CD4-positive, alpha-beta memory T cell (primary cell): ENCODE measurements at regions of chr2 and their contacts with region 1.

Region 1: GRCh38 chr2:233267516-233268245 is 16.2 kb downstream of the ATG16L1 start:
- DNase-seq: peak; percentile 90 to 96 (median 93)
- H3K4me3 ChIP-seq: peak overlapping the region in 1 of 2 donors; percentile 39
- H3K4me3 Mint-ChIP-seq: peak overlapping the region; percentile 52 to 89 (median 79)
- H3K27ac ChIP-seq: peak overlapping the region; percentile 81
- H3K27ac Mint-ChIP-seq: peak overlapping the region; percentile 96 to 99 (median 97)
- H3K4me1 ChIP-seq: peaks cover 68% of the 10 kb centered on the region
- H3K4me1 Mint-ChIP-seq: peaks cover 39 to 76% (median 64%) of the 10 kb centered on the region in 4 donors
- H3K27me3 ChIP-seq: no peaks in the 10 kb centered on the region
- H3K27me3 Mint-ChIP-seq: no peaks in the 10 kb centered on the region

Region 2: DNA sequence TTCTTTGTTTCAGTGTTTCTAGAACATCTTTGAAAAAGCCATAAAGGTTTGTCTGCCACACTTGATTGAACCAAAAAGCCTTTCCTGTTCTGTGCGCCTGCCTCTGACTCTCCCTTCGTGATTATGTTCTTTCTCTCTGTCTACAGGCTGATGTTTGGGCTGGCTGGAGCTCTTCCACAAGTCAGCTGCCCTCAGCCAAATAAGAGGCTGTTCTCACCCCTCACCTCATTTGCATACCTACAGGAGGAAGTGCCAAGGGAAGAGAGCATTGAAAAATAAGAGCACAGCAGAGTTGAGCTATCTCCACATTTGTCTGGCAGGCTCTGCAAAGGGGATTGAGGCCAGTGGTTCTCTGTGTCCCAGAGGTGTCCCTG is 191.7 kb before region 1 on chr2:
- CTCF ChIA-PET with region 1: no interaction called
- POLR2A ChIA-PET with region 1: interaction called, 13 read pairs
- intact Hi-C with region 1: loop called (anchors 5 kb)
- DNase-seq: peak; percentile 45 to 69 (median 50)
- H3K4me3 ChIP-seq: peak overlapping the region; percentile 9 to 41
- H3K4me3 Mint-ChIP-seq: no peak overlapping the region
- H3K27ac ChIP-seq: peak overlapping the region; percentile 44
- H3K27ac Mint-ChIP-seq: no peak overlapping the region
- H3K4me1 ChIP-seq: peaks cover 92% of the 10 kb centered on the region
- H3K4me1 Mint-ChIP-seq: peaks cover 37 to 42% (median 41%) of the 10 kb centered on the region in 4 donors
- H3K27me3 ChIP-seq: no peaks in the 10 kb centered on the region
- H3K27me3 Mint-ChIP-seq: peaks cover 0 to 1% of the 10 kb centered on the region in 2 donors

Region 3: DNA sequence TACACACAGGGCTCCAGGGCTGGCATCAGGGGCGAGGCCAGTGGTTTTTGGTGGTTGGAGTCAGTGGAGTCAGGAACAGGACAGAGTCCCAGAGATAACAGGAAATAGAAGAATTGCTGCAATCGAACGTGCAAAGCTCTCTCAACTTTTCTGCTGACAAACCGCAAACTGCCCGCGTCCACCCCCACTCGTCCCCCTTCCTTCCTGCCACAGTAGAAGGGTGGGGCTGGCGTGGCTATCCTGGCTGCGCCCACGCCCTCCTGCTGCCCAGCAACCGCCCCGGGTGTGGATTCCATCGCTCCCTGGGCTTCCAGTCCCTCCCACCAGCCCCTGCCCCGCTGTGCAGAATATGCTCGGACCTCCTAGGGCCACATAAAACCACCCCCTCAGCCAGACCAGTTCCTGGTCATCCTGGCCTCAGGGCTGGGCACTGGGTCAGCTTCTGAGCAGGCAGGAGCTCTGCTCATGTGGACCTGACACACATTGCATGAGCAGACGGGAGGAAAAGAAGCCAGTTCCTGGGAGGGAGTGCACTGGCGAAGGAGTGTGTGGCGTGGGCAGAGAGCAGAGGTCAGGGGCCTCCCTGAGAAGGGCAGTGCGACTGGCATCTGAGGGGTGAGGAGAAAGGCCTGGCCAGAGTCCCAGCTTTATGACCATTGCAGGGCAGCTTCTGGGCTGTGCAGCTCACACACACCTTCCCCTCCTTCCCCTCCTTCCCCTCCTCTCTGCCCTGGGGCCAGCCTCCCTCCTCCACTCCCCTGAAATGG is 101.6 kb before region 1 on chr2:
- CTCF ChIA-PET with region 1: no interaction called
- POLR2A ChIA-PET with region 1: no interaction called
- intact Hi-C with region 1: no loop called
- DNase-seq: peak in 4 of 5 donors; percentile 11 to 28 (median 24)
- H3K4me3 ChIP-seq: peak overlapping the region in 1 of 2 donors; percentile 2
- H3K4me3 Mint-ChIP-seq: peak overlapping the region in 1 of 8 donors; percentile 30
- H3K27ac ChIP-seq: peak overlapping the region; percentile 7
- H3K27ac Mint-ChIP-seq: peak overlapping the region in 1 of 7 donors; percentile 36
- H3K4me1 ChIP-seq: peaks cover 33% of the 10 kb centered on the region
- H3K4me1 Mint-ChIP-seq: peaks cover 0 to 14% (median 6%) of the 10 kb centered on the region in 4 donors
- H3K27me3 ChIP-seq: no peaks in the 10 kb centered on the region
- H3K27me3 Mint-ChIP-seq: no peaks in the 10 kb centered on the region

Region 4: GRCh38 chr2:233242231-233242927 is 25.3 kb before region 1 on chr2:
- CTCF ChIA-PET with region 1: no interaction called
- POLR2A ChIA-PET with region 1: interaction called, 13 read pairs
- intact Hi-C with region 1: no loop called
- DNase-seq: peak in 1 of 5 donors; percentile 9
- H3K4me3 ChIP-seq: no peak overlapping the region
- H3K4me3 Mint-ChIP-seq: peak overlapping the region in 4 of 8 donors; percentile 7 to 67 (median 30)
- H3K27ac ChIP-seq: no peak overlapping the region
- H3K27ac Mint-ChIP-seq: peak overlapping the region in 5 of 7 donors; percentile 22 to 85 (median 73)
- H3K4me1 ChIP-seq: peaks cover 63% of the 10 kb centered on the region
- H3K4me1 Mint-ChIP-seq: peaks cover 38 to 81% (median 56%) of the 10 kb centered on the region in 4 donors
- H3K27me3 ChIP-seq: no peaks in the 10 kb centered on the region
- H3K27me3 Mint-ChIP-seq: no peaks in the 10 kb centered on the region

Region 5: DNA sequence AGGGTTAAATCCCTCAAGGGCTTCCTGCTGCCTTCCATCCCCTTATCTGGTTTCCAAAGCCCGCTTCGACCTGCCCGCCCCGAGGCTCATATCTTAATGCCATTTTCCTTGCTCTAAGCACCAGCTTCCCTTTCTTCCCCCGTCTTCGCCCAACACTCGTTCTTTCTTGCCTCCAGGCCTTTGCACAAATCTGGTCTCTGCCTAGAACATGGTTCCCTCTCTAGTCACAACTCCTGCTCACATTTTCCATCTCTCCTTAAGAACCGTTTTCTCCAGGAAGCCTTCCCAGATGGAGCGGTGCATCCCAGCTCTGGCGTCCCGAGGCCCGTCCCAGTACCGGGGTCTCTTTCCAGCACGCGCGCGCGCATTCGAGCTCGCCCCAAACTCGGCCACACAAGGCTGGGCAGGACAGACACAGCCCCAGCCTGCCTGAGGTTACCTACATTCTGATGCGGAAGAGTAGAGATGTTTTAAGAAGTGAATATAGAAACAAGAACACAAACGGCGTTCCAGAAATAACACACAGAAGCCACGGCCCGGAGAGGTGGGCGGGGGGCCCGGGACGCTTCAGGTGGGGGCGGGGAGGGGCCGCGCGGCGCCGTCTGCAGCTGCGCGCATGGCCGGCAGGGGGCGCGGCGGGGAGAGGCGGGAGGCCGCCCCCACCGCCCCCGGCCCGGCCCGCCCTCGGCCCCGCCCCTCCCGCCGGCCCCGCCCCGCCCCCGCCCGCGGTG is 86.3 kb after region 1 on chr2 and contains the start of gene DGKD:
- CTCF ChIA-PET with region 1: interaction called, 11 read pairs
- POLR2A ChIA-PET with region 1: interaction called, 27 read pairs
- intact Hi-C with region 1: loop called (anchors 5 kb)
- DNase-seq: peak; percentile 63 to 72 (median 65)
- H3K4me3 ChIP-seq: peak within 1 kb of the TSS; percentile 75 to 76
- H3K4me3 Mint-ChIP-seq: peak within 1 kb of the TSS; percentile 89 to 98 (median 94)
- H3K27ac ChIP-seq: peak within 1 kb of the TSS; percentile 55
- H3K27ac Mint-ChIP-seq: peak within 1 kb of the TSS; percentile 91 to 97 (median 92)
- H3K4me1 ChIP-seq: peaks cover 48% of the 10 kb centered on the region
- H3K4me1 Mint-ChIP-seq: peaks cover 51 to 75% (median 57%) of the 10 kb centered on the region in 4 donors
- H3K27me3 ChIP-seq: no peaks in the 10 kb centered on the region
- H3K27me3 Mint-ChIP-seq: peaks cover 0 to 1% of the 10 kb centered on the region in 2 donors
- total RNA-seq, gene DGKD: 129 to 136 TPM

Region 6: DNA sequence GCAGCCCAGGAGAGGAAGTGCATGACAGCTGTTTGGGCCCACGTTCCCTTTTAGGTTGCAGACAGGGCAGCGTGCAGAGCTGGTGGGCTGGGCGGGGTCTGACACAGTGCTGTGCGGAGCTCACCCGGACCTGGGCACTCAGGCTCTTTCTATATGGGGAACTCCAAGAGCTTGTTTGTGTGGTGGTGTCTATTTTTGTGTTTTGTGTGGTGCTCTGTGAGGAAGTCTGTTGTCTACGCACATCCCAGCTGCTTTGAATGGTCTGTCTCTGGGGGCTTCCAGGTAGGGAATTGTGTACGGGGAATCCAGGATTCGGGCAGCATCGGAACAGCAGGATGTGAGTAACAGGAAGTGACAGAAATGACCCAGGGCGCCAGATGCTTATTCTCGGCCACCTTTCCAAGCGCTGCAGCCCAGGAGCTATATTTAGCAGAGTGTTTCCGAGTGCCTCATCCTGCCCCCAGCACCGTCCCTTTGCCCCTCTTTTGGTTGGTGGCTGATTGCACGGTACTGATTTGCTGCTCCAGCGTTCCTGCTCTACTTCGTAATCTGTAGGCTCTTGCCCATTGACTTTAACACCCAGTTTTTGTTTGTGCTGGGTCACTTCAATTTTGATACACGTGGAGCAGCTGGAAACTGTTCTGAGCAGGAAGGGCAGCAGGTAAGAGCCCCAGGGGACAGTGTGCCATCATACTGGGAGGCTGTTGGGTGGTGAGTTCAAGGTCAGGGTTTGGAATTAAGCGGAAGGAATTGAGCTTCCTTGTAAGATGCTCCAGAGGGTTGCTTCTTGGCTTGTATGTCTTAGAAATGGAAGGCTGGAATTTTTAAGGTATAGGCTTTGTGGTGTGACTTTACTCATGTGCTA is 151.3 kb after region 1 on chr2:
- CTCF ChIA-PET with region 1: no interaction called
- POLR2A ChIA-PET with region 1: interaction called, 16 read pairs
- intact Hi-C with region 1: loop called (anchors 10 kb)
- DNase-seq: peak; percentile 36 to 79 (median 45)
- H3K4me3 ChIP-seq: peak overlapping the region; percentile 53 to 56
- H3K4me3 Mint-ChIP-seq: peak overlapping the region; percentile 87 to 99 (median 92)
- H3K27ac ChIP-seq: peak overlapping the region; percentile 71
- H3K27ac Mint-ChIP-seq: peak overlapping the region; percentile 93 to 99 (median 96)
- H3K4me1 ChIP-seq: peaks cover 100% of the 10 kb centered on the region
- H3K4me1 Mint-ChIP-seq: peaks cover 73 to 99% (median 89%) of the 10 kb centered on the region in 4 donors
- H3K27me3 ChIP-seq: no peaks in the 10 kb centered on the region
- H3K27me3 Mint-ChIP-seq: no peaks in the 10 kb centered on the region